MCF 10A (cell line): ENCODE measurements at regions of chr7 and their contacts with region 1.

Region 1: GRCh38 chr7:90412458-90413184 is 9.4 kb downstream of the CLDN12 start:
- DNase-seq: peak; percentile 48
- H3K4me3 Mint-ChIP-seq: no peak overlapping the region
- H3K27ac Mint-ChIP-seq: no peak overlapping the region
- H3K4me1 Mint-ChIP-seq: peaks cover 1% of the 10 kb centered on the region
- H3K27me3 Mint-ChIP-seq: no peaks in the 10 kb centered on the region
- CTCF ChIP-seq: peak; percentile 44

Region 2: GRCh38 chr7:90312745-90313144 is 99.9 kb before region 1 on chr7:
- CTCF ChIA-PET with region 1: interaction called, 3 read pairs
- POLR2A ChIA-PET with region 1: no interaction called
- intact Hi-C with region 1: loop called (anchors 1 kb)
- DNase-seq: peak; percentile 17
- H3K4me3 Mint-ChIP-seq: no peak overlapping the region
- H3K27ac Mint-ChIP-seq: no peak overlapping the region
- H3K4me1 Mint-ChIP-seq: no peaks in the 10 kb centered on the region
- H3K27me3 Mint-ChIP-seq: peaks cover 15% of the 10 kb centered on the region
- CTCF ChIP-seq: peak; percentile 28